Naive thymus-derived CD4-positive, alpha-beta T cell (primary cell): ENCODE measurements at regions of chr5 and their contacts with region 1.

Region 1: GRCh38 chr5:57173185-57174127 is at the start of gene GPBP1:
- DNase-seq: peak; percentile 94 to 99 (median 98)
- ATAC-seq: peak; percentile 88
- H3K4me3 ChIP-seq: peak within 1 kb of the TSS; percentile 95
- H3K4me3 Mint-ChIP-seq: peak within 1 kb of the TSS; percentile 89 to 100 (median 97)
- H3K27ac ChIP-seq: peak within 1 kb of the TSS; percentile 99
- H3K27ac Mint-ChIP-seq: peak within 1 kb of the TSS; percentile 92 to 100 (median 98)
- H3K4me1 ChIP-seq: peaks cover 4 to 8% of the 10 kb centered on the region in 2 donors
- H3K4me1 Mint-ChIP-seq: peaks cover 23 to 38% (median 29%) of the 10 kb centered on the region in 7 donors
- H3K27me3 ChIP-seq: no peaks in the 10 kb centered on the region
- H3K27me3 Mint-ChIP-seq: no peaks in the 10 kb centered on the region
- total RNA-seq, gene GPBP1: 99.2 to 149 (median 116) TPM

Region 2: GRCh38 chr5:55307383-55308253 is 1865.8 kb before region 1 on chr5 and contains the starts of genes DHX29 and MTREX:
- CTCF ChIA-PET with region 1: no interaction called
- POLR2A ChIA-PET with region 1: no interaction called
- intact Hi-C with region 1: loop called in 1 of 2 experiments (anchors 1 kb)
- DNase-seq: peak; percentile 85 to 93 (median 91)
- ATAC-seq: peak; percentile 94
- H3K4me3 ChIP-seq: peak within 1 kb of the TSS; percentile 97
- H3K4me3 Mint-ChIP-seq: no peak within 1 kb of the TSS
- H3K27ac ChIP-seq: peak within 1 kb of the TSS; percentile 89
- H3K27ac Mint-ChIP-seq: no peak within 1 kb of the TSS
- H3K4me1 ChIP-seq: peaks cover 28 to 33% of the 10 kb centered on the region in 2 donors
- H3K4me1 Mint-ChIP-seq: peaks cover 15 to 34% (median 21%) of the 10 kb centered on the region in 7 donors
- H3K27me3 ChIP-seq: no peaks in the 10 kb centered on the region
- H3K27me3 Mint-ChIP-seq: no peaks in the 10 kb centered on the region
- total RNA-seq, gene DHX29: 12.5 to 19.2 (median 15.9) TPM
- total RNA-seq, gene MTREX: 64.0 to 83.7 (median 66.3) TPM

Region 3: GRCh38 chr5:55994574-55995333 is 1178.7 kb before region 1 on chr5 and contains the start of gene IL6ST:
- CTCF ChIA-PET with region 1: no interaction called
- POLR2A ChIA-PET with region 1: no interaction called
- intact Hi-C with region 1: loop called in 1 of 2 experiments (anchors 2 kb)
- DNase-seq: peak; percentile 93 to 99 (median 95)
- ATAC-seq: peak; percentile 96
- H3K4me3 ChIP-seq: peak within 1 kb of the TSS; percentile 94
- H3K4me3 Mint-ChIP-seq: peak within 1 kb of the TSS; percentile 88 to 99 (median 96)
- H3K27ac ChIP-seq: peak within 1 kb of the TSS; percentile 99
- H3K27ac Mint-ChIP-seq: peak within 1 kb of the TSS; percentile 95 to 100 (median 98)
- H3K4me1 ChIP-seq: peaks cover 10 to 12% of the 10 kb centered on the region in 2 donors
- H3K4me1 Mint-ChIP-seq: peaks cover 28 to 59% (median 50%) of the 10 kb centered on the region in 7 donors
- H3K27me3 ChIP-seq: no peaks in the 10 kb centered on the region
- H3K27me3 Mint-ChIP-seq: no peaks in the 10 kb centered on the region
- total RNA-seq, gene IL6ST: 101 to 372 (median 346) TPM

Region 4: GRCh38 chr5:56301041-56301440 is 872.4 kb before region 1 on chr5:
- CTCF ChIA-PET with region 1: no interaction called
- POLR2A ChIA-PET with region 1: no interaction called
- intact Hi-C with region 1: no loop called
- DNase-seq: no peak
- ATAC-seq: no peak
- H3K4me3 ChIP-seq: no peak overlapping the region
- H3K4me3 Mint-ChIP-seq: no peak overlapping the region
- H3K27ac ChIP-seq: no peak overlapping the region
- H3K27ac Mint-ChIP-seq: no peak overlapping the region
- H3K4me1 ChIP-seq: no peaks in the 10 kb centered on the region
- H3K4me1 Mint-ChIP-seq: peaks cover 0 to 3% (median 0%) of the 10 kb centered on the region in 7 donors
- H3K27me3 ChIP-seq: no peaks in the 10 kb centered on the region
- H3K27me3 Mint-ChIP-seq: no peaks in the 10 kb centered on the region

Region 5: GRCh38 chr5:56328753-56329560 is 844.5 kb before region 1 on chr5:
- CTCF ChIA-PET with region 1: no interaction called
- POLR2A ChIA-PET with region 1: no interaction called
- intact Hi-C with region 1: loop called in 1 of 2 experiments (anchors 5 kb)
- DNase-seq: peak in 8 of 9 donors; percentile 22 to 75 (median 54)
- ATAC-seq: peak; percentile 88
- H3K4me3 ChIP-seq: peak overlapping the region; percentile 40
- H3K4me3 Mint-ChIP-seq: peak overlapping the region in 9 of 10 donors; percentile 15 to 81 (median 70)
- H3K27ac ChIP-seq: peak overlapping the region; percentile 69
- H3K27ac Mint-ChIP-seq: peak overlapping the region; percentile 46 to 95 (median 83)
- H3K4me1 ChIP-seq: peaks cover 22 to 49% of the 10 kb centered on the region in 2 donors
- H3K4me1 Mint-ChIP-seq: peaks cover 33 to 86% (median 72%) of the 10 kb centered on the region in 7 donors
- H3K27me3 ChIP-seq: no peaks in the 10 kb centered on the region
- H3K27me3 Mint-ChIP-seq: no peaks in the 10 kb centered on the region

Region 6: DNA sequence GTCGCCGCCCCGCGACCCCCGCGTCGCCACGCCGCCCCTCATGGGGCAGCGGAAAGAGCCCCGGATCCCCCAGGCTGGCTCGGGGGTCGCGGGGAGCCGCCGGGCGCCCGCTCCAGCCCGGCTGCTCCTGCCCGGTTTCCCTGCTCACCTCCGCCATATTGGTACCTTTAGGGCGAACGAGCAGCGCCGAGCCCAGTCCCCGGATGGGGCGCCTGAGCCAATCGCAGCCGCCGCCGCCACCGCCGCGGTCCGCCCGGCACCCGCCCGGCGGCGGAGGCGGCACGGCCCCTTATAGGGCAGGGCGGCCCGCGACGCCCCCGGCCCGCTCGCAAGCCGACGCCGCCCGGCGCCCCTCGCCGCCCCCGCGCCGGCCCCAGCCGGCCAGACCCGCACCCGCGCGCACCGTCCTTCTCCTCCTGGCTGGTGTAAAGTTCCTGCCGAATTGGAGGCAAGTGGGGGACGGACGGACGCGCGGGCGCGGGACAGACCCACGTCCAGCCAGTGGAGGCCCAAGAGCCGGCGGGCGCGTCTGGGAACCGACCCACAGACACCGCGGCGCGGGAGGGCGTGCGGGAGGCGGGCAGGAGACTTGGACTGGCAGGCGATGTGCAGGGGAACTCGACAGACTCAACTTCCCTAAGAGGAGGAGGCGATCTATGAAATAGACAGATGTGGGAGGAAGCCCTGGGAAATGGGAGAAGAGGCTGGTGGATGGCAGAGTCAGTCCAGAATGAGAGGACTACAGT is 221.3 kb before region 1 on chr5 and contains the start of gene MIER3:
- CTCF ChIA-PET with region 1: no interaction called
- POLR2A ChIA-PET with region 1: interaction called, 8 read pairs
- intact Hi-C with region 1: loop called (anchors 1 kb)
- DNase-seq: peak; percentile 66 to 87 (median 80)
- ATAC-seq: peak; percentile 94
- H3K4me3 ChIP-seq: peak within 1 kb of the TSS; percentile 75
- H3K4me3 Mint-ChIP-seq: peak within 1 kb of the TSS; percentile 89 to 98 (median 96)
- H3K27ac ChIP-seq: peak within 1 kb of the TSS; percentile 73
- H3K27ac Mint-ChIP-seq: peak within 1 kb of the TSS in 8 of 9 donors; percentile 84 to 95 (median 88)
- H3K4me1 ChIP-seq: peaks cover 6 to 10% of the 10 kb centered on the region in 2 donors
- H3K4me1 Mint-ChIP-seq: peaks cover 18 to 32% (median 22%) of the 10 kb centered on the region in 7 donors
- H3K27me3 ChIP-seq: peaks cover 0 to 5% of the 10 kb centered on the region in 2 donors
- H3K27me3 Mint-ChIP-seq: peaks cover 10 to 45% (median 24%) of the 10 kb centered on the region in 5 donors
- total RNA-seq, gene MIER3: 14.9 to 35.0 (median 26.2) TPM

Region 7: DNA sequence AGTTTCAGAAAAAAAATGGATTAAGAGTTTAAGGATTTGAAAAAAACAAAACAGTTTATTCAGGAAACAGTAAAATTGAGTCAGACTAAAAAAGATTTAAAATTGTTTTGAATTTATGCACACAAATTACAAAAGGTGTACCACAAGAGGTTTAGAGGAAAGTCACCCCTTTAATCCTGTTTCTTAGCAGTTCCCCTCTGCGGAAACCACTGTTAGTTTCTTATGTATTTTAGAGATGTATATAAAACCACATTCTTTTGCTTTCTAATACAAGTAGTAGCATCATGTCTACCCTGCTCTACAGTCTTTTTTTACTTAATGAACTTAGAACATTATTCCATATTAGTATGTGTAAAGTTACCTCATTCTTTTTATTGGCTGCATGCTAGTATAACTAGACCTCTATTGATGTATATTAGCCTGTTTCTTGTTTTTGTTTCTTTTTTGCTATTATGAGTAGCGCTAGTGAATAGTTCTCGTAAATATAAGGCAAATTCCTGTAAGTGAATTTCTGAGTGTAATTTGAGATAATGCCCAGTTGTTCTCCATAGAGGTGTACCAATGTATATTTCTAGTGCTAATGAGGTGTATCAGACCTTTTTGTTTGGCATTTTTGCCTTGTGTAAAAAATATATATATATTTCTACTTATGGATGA is 20.4 kb after region 1 on chr5:
- CTCF ChIA-PET with region 1: no interaction called
- POLR2A ChIA-PET with region 1: interaction called, 7 read pairs
- intact Hi-C with region 1: loop called (anchors 1 to 2 kb)
- DNase-seq: peak in 5 of 9 donors; percentile 19 to 49 (median 29)
- ATAC-seq: peak; percentile 80
- H3K4me3 ChIP-seq: no peak overlapping the region
- H3K4me3 Mint-ChIP-seq: peak overlapping the region in 9 of 10 donors; percentile 17 to 73 (median 63)
- H3K27ac ChIP-seq: no peak overlapping the region
- H3K27ac Mint-ChIP-seq: peak overlapping the region in 8 of 9 donors; percentile 10 to 91 (median 69)
- H3K4me1 ChIP-seq: peaks cover 26 to 40% of the 10 kb centered on the region in 2 donors
- H3K4me1 Mint-ChIP-seq: peaks cover 45 to 92% (median 83%) of the 10 kb centered on the region in 7 donors
- H3K27me3 ChIP-seq: no peaks in the 10 kb centered on the region
- H3K27me3 Mint-ChIP-seq: no peaks in the 10 kb centered on the region

Region 8: GRCh38 chr5:58460732-58461286 is 1287.4 kb after region 1 on chr5:
- CTCF ChIA-PET with region 1: no interaction called
- POLR2A ChIA-PET with region 1: interaction called, 3 read pairs
- intact Hi-C with region 1: loop called (anchors 1 kb)
- DNase-seq: peak; percentile 76 to 95 (median 88)
- ATAC-seq: peak; percentile 79
- H3K4me3 ChIP-seq: peak overlapping the region; percentile 66
- H3K4me3 Mint-ChIP-seq: peak overlapping the region; percentile 86 to 96 (median 91)
- H3K27ac ChIP-seq: peak overlapping the region; percentile 84
- H3K27ac Mint-ChIP-seq: peak overlapping the region; percentile 20 to 90 (median 79)
- H3K4me1 ChIP-seq: peaks cover 0 to 9% of the 10 kb centered on the region in 2 donors
- H3K4me1 Mint-ChIP-seq: peaks cover 9 to 26% (median 16%) of the 10 kb centered on the region in 7 donors
- H3K27me3 ChIP-seq: no peaks in the 10 kb centered on the region
- H3K27me3 Mint-ChIP-seq: peaks cover 4 to 22% (median 14%) of the 10 kb centered on the region in 5 donors